ENCODE measurements at regions of chr2 and their contacts with region 1.

Region 1: GRCh38 chr2:186503848-186504606 is 18.0 kb downstream of the ZC3H15 start:
- DNase-seq: peak in 2 of 3 donors; percentile 6 to 25
- H3K4me3 ChIP-seq: no peak overlapping the region
- H3K4me3 Mint-ChIP-seq: no peak overlapping the region
- H3K27ac ChIP-seq: peak overlapping the region in 1 of 2 donors; percentile 29
- H3K27ac Mint-ChIP-seq: peak overlapping the region in 2 of 7 donors; percentile 74 to 76
- H3K4me1 ChIP-seq: no peaks in the 10 kb centered on the region
- H3K4me1 Mint-ChIP-seq: peaks cover 2% of the 10 kb centered on the region
- H3K27me3 ChIP-seq: no peaks in the 10 kb centered on the region
- H3K27me3 Mint-ChIP-seq: no peaks in the 10 kb centered on the region
- CTCF ChIP-seq: peak; percentile 69

Region 2: DNA sequence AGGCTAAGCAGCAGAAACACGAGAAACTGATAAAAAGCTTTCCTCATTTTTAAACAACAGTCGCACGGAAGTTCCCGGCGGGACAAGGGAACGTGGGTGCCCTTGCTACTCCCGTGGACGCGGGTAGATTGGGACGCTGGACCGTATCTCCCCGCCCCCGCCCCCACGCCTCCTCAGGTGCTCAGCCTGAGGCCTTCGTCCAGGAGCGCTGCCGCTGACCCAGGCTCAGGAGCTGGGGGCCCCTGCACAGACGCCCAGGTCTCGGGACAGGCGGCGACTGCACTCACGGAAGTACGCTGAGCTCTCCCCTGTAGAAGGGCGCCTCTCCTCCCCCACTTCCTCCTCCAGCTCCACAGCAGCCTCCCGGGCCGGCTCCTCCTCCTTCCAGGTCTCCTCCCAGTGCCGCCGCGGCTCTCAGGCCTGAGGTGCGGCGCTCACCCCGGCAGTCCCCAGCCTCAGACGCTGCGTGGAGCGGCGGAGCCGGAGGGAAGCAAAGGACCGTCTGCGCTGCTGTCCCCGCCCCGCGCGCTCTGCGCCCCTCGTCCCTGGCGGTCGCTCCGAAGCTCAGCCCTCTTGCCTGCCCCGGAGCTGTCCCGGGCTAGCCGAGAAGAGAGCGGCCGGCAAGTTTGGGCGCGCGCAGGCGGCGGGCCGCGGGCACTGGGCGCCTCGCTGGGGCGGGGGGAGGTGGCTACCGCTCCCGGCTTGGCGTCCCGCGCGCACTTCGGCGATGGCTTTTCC is 85.8 kb after region 1 on chr2 and contains the start of gene ITGAV:
- intact Hi-C with region 1: loop called in 1 of 2 experiments (anchors 10 kb)
- DNase-seq: peak; percentile 86 to 90 (median 89)
- H3K4me3 ChIP-seq: peak within 1 kb of the TSS; percentile 82 to 97 (median 92)
- H3K4me3 Mint-ChIP-seq: peak within 1 kb of the TSS; percentile 90 to 94
- H3K27ac ChIP-seq: peak within 1 kb of the TSS; percentile 80 to 90
- H3K27ac Mint-ChIP-seq: peak within 1 kb of the TSS; percentile 78 to 91 (median 84)
- H3K4me1 ChIP-seq: peaks cover 18 to 27% of the 10 kb centered on the region in 2 donors
- H3K4me1 Mint-ChIP-seq: peaks cover 24% of the 10 kb centered on the region
- H3K27me3 ChIP-seq: no peaks in the 10 kb centered on the region
- H3K27me3 Mint-ChIP-seq: peaks cover 2 to 7% (median 6%) of the 10 kb centered on the region in 3 donors
- CTCF ChIP-seq: no peak
- polyA plus RNA-seq, gene ITGAV: 4.9 to 8.2 (median 6.0) TPM

Region 3: DNA sequence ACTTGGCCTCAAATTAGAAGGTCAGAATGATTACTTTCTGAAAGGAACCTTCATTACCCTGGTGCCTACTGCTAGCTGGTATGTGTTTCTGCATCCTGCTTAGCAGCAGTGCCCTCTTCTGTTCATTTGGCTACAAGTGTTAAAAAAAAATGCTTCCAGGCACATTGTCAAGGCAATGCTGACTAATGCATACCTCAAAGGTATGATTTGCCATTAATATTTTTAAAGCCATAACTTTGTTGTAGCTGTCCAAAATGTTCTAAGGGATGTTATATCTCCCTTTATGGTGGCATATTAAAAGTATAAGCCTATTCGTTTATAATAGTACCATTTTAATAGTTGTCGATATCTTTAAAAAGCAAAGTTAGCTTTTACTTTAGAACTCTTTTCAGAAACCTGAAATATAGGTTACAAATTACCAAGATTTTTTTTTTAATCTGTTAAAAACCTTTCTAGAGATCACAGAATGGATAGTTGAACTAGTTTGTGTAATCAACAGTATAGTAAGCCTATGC is 137.8 kb after region 1 on chr2:
- intact Hi-C with region 1: loop called (anchors 5 to 10 kb)
- DNase-seq: peak; percentile 12 to 37 (median 30)
- H3K4me3 ChIP-seq: no peak overlapping the region
- H3K4me3 Mint-ChIP-seq: no peak overlapping the region
- H3K27ac ChIP-seq: no peak overlapping the region
- H3K27ac Mint-ChIP-seq: no peak overlapping the region
- H3K4me1 ChIP-seq: peaks cover 22 to 26% of the 10 kb centered on the region in 2 donors
- H3K4me1 Mint-ChIP-seq: peaks cover 24% of the 10 kb centered on the region
- H3K27me3 ChIP-seq: no peaks in the 10 kb centered on the region
- H3K27me3 Mint-ChIP-seq: no peaks in the 10 kb centered on the region
- CTCF ChIP-seq: peak; percentile 57

Measured in CD14-positive monocyte (primary cell).